Aorta (tissue), 5 donors: ENCODE measurements at regions of chr19 and their contacts with region 1.

Region 1: DNA sequence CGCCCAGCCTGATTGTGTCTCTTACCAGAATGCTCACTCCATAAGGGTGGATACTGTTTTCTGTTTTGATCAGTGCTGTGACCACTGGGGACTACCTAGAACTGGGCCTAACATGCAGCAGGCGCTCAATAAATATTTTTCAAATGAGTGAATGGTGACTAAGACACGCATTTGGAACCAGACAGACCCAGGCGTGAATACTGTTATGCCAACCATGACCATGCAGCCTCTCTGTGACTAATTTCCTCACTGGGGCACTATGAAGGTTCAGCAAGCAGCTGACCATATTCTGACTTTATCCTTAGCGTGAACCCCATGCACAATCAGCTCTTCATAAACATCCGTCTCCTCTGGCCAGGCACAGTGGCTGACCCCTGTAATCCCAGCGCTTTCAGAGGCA is 13.0 kb upstream of the SPC24 start:
- DNase-seq: no peak
- ATAC-seq: peak; percentile 25
- H3K4me3 ChIP-seq: no peak overlapping the region
- H3K27ac ChIP-seq: peak overlapping the region; percentile 31 to 87
- H3K4me1 ChIP-seq: no peaks in the 10 kb centered on the region
- H3K27me3 ChIP-seq: no peaks in the 10 kb centered on the region

Region 2: DNA sequence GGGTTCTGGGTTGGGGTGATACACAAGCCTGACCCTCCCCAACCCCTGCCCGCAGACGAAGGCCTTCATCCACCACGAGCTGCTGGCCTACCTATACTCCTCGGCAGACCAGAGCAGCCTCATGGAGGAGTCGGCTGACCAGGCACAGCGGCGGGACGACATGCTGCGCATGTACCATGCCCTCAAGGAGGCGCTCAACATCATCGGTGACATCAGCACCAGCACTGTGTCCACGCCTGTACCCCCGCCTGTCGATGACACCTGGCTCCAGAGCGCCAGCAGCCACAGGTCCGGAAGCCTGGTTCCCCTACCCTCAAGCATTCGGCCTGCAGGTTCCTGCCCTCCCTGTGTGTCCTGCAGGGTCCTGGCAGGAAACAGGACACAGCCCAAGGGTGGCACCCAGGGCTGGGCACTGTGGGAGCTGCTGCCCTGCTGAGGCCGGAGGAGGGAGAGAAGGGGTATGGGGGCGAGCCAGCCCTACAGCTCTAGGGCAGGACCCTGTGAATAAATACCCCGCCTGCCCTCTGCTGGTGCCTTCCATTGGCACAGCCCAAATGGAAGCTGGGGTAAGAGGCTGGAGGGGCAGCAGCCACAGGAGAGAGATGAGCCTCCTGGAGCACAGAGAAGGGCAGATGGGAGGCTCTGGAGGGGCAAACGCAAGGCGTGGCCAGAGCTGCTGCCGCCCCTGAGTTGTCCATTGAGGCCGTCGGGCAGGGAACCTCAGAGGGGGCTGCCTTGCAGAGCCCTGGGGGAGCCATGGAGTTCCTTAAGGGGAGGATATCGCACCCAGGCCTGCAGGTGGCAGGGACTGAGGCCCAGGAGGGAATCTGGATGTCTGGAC is 339.4 kb before region 1 on chr19:
- intact Hi-C with region 1: no loop called
- DNase-seq: no peak
- ATAC-seq: no peak
- H3K4me3 ChIP-seq: no peak overlapping the region
- H3K27ac ChIP-seq: no peak overlapping the region
- H3K4me1 ChIP-seq: no peaks in the 10 kb centered on the region
- H3K27me3 ChIP-seq: no peaks in the 10 kb centered on the region

Region 3: GRCh38 chr19:11197264-11198174 is 29.0 kb after region 1 on chr19 and contains the start of gene KANK2:
- intact Hi-C with region 1: loop called in 1 of 2 experiments (anchors 2 kb)
- DNase-seq: peak; percentile 89 to 95
- ATAC-seq: peak; percentile 90
- H3K4me3 ChIP-seq: peak within 1 kb of the TSS; percentile 82 to 91
- H3K27ac ChIP-seq: peak within 1 kb of the TSS in 1 of 2 donors; percentile 84
- H3K4me1 ChIP-seq: no peaks in the 10 kb centered on the region
- H3K27me3 ChIP-seq: no peaks in the 10 kb centered on the region
- total RNA-seq, gene KANK2: 316 to 379 TPM

Region 4: DNA sequence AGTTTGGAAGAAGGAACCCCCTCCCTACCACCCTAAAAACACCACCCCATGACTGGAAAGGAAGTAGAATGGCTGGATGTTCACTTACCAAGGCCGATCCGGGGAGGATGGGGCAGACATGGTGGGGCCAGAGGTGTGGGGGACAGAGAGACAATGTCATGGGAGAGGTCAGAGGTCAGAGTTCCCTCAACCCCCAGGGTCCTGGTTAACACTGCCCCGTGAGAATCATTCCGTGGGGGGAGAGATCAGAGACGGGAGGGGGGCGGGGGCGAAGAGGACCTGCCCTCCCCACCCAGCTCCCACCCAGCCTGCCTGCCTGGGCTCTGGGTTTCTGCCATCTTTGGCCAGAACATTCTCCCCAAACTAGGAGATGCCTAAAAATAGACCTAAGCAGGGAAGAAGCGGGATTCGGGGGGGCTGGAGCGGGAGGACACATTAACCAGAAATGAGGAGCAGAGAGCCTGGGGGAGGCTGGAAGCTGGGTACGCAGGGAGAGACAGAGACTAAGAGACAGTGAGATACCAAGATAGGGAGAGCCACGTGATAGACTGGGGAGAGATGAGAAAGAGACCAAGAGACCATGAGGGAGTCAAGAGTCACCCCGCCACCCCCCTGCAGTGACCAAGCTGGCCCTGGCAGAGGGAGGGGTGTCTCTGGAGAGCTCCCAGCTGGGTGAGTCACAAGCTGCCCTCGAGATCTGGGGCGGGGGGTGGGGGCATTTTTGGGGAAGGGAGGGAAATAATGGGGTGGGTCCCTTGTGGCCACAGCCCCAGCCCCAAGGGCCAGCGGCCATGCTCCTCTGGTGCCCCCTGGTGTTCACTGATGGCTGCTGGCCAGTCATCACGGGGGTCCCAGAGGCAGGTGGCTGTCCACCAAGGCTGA is 34.9 kb after region 1 on chr19:
- intact Hi-C with region 1: loop called in 1 of 2 experiments (anchors 2 kb)
- DNase-seq: peak; percentile 91 to 94
- ATAC-seq: peak; percentile 83
- H3K4me3 ChIP-seq: no peak overlapping the region
- H3K27ac ChIP-seq: peak overlapping the region; percentile 71 to 83
- H3K4me1 ChIP-seq: no peaks in the 10 kb centered on the region
- H3K27me3 ChIP-seq: no peaks in the 10 kb centered on the region